ENCODE measurements at regions of chr12 and their contacts with region 1.

Region 1: GRCh38 chr12:100668945-100669536 is 95.6 kb downstream of the GAS2L3 start:
- DNase-seq: peak; percentile 83
- H3K4me3 Mint-ChIP-seq: no peak overlapping the region
- H3K27ac Mint-ChIP-seq: no peak overlapping the region
- H3K4me1 Mint-ChIP-seq: no peaks in the 10 kb centered on the region
- H3K27me3 Mint-ChIP-seq: peaks cover 23% of the 10 kb centered on the region
- CTCF ChIP-seq: peak; percentile 86

Region 2: GRCh38 chr12:100234598-100235304 is 434.3 kb before region 1 on chr12:
- CTCF ChIA-PET with region 1: no interaction called
- POLR2A ChIA-PET with region 1: no interaction called
- intact Hi-C with region 1: loop called (anchors 10 kb)
- DNase-seq: peak; percentile 56
- H3K4me3 Mint-ChIP-seq: no peak overlapping the region
- H3K27ac Mint-ChIP-seq: no peak overlapping the region
- H3K4me1 Mint-ChIP-seq: peaks cover 6% of the 10 kb centered on the region
- H3K27me3 Mint-ChIP-seq: no peaks in the 10 kb centered on the region
- CTCF ChIP-seq: peak; percentile 60

Region 3: GRCh38 chr12:100681074-100681473 is 12.0 kb after region 1 on chr12:
- CTCF ChIA-PET with region 1: interaction called, 11 read pairs
- POLR2A ChIA-PET with region 1: no interaction called
- intact Hi-C with region 1: no loop called
- DNase-seq: no peak
- H3K4me3 Mint-ChIP-seq: no peak overlapping the region
- H3K27ac Mint-ChIP-seq: no peak overlapping the region
- H3K4me1 Mint-ChIP-seq: no peaks in the 10 kb centered on the region
- H3K27me3 Mint-ChIP-seq: no peaks in the 10 kb centered on the region
- CTCF ChIP-seq: no peak

Region 4: DNA sequence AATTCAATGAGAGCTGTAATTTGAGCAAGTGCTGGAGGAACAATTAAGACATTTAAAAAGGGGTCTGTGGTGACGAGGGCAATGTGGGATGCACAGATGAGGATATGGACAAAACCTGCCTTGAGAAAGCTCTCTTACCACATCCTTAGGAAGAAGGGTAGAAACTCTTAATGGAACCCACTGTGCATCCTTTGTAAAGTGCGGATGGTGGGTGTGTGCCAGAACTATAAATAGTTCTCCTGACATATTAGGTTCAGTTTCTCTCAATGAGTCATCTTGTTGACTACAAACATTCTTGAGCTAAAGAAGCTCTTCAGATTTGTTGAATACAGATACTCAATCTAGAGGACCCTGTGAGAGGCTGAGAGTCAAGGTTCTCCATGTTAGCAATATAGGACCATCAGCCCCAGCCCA is 19.4 kb after region 1 on chr12:
- CTCF ChIA-PET with region 1: interaction called, 19 read pairs
- POLR2A ChIA-PET with region 1: no interaction called
- intact Hi-C with region 1: no loop called
- DNase-seq: peak; percentile 33
- H3K4me3 Mint-ChIP-seq: no peak overlapping the region
- H3K27ac Mint-ChIP-seq: no peak overlapping the region
- H3K4me1 Mint-ChIP-seq: peaks cover 6% of the 10 kb centered on the region
- H3K27me3 Mint-ChIP-seq: no peaks in the 10 kb centered on the region
- CTCF ChIP-seq: no peak

Region 5: GRCh38 chr12:100741084-100741711 is 72.2 kb after region 1 on chr12:
- CTCF ChIA-PET with region 1: interaction called, 80 read pairs
- POLR2A ChIA-PET with region 1: no interaction called
- intact Hi-C with region 1: loop called (anchors 1 kb)
- DNase-seq: peak; percentile 37
- H3K4me3 Mint-ChIP-seq: no peak overlapping the region
- H3K27ac Mint-ChIP-seq: no peak overlapping the region
- H3K4me1 Mint-ChIP-seq: no peaks in the 10 kb centered on the region
- H3K27me3 Mint-ChIP-seq: peaks cover 6% of the 10 kb centered on the region
- CTCF ChIP-seq: peak; percentile 51